Activated naive CD8-positive, alpha-beta T cell treated with anti-CD3 and anti-CD28 coated beads, Interleukin-2, amount 10 ng/mL, durations not matched to agents 7 days and 5 days (primary cell): ENCODE measurements at regions of chr1 and their contacts with region 1.

Region 1: GRCh38 chr1:53326088-53326597 is 1.7 kb downstream of the LRP8 start:
- DNase-seq: peak; percentile 97
- ATAC-seq: peak; percentile 89
- H3K4me3 Mint-ChIP-seq: peak overlapping the region; percentile 90
- H3K27ac Mint-ChIP-seq: peak overlapping the region; percentile 93
- H3K4me1 Mint-ChIP-seq: peaks cover 44% of the 10 kb centered on the region
- H3K27me3 Mint-ChIP-seq: no peaks in the 10 kb centered on the region

Region 2: GRCh38 chr1:53367503-53368304 is 41.6 kb after region 1 on chr1:
- POLR2A ChIA-PET with region 1: interaction called, 76 read pairs
- DNase-seq: peak; percentile 47
- ATAC-seq: peak; percentile 95
- H3K4me3 Mint-ChIP-seq: peak overlapping the region; percentile 97
- H3K27ac Mint-ChIP-seq: peak overlapping the region; percentile 95
- H3K4me1 Mint-ChIP-seq: peaks cover 22% of the 10 kb centered on the region
- H3K27me3 Mint-ChIP-seq: no peaks in the 10 kb centered on the region

Region 3: DNA sequence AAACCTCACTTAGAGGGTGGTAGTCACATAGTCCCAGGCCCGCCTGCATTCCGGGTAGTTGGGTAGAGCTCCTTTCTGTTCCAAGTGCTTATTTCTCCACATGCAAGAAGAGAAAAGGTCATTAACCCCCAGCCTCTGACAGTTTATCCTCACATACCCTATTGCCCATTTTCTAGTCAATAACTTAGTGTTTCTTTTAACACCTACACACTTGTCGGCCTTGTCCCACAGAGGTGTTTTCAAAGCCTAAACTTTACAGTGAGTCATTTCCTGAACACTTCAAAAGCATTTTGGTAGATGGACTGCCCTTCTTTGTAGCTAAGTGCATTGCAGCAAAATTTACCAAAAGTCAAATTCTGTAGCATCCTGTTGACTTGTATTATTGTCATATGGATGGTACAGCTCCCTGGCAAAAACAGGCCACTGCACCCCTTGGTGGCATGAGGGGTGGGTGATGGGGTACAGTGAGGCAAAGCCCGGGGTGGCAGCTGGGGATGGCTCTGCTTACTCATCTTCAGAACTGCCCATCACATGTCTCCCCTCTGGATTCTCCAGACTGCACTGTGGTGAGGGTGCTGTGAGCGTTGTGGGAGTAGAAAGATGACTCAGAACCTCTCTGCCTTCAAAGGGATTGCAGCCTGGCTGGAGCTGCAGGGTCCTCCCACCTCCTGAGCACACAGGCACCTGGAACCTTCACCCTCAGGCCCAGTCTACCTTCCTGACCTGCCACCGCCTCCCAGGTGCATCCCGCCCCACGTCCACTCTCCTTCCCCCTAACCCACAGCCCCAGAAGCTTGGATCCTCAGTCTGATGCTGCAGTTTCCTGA is 87.2 kb after region 1 on chr1:
- POLR2A ChIA-PET with region 1: interaction called, 18 read pairs
- DNase-seq: peak; percentile 73
- ATAC-seq: peak; percentile 89
- H3K4me3 Mint-ChIP-seq: peak overlapping the region; percentile 75
- H3K27ac Mint-ChIP-seq: peak overlapping the region; percentile 99
- H3K4me1 Mint-ChIP-seq: peaks cover 34% of the 10 kb centered on the region
- H3K27me3 Mint-ChIP-seq: no peaks in the 10 kb centered on the region